Astrocyte of the cerebellum (primary cell): ENCODE measurements at regions of chr9 and their contacts with region 1.

Region 1: GRCh38 chr9:10534850-10535249 is 78.0 kb downstream of the PTPRD start:
- DNase-seq: no peak
- H3K4me3 ChIP-seq: no peak overlapping the region
- CTCF ChIP-seq: no peak

Region 2: GRCh38 chr9:10232352-10232930 is 302.4 kb before region 1 on chr9:
- in situ Hi-C with region 1: no loop called
- DNase-seq: no peak
- H3K4me3 ChIP-seq: no peak overlapping the region
- CTCF ChIP-seq: peak; percentile 44

Region 3: GRCh38 chr9:10282084-10282483 is 252.8 kb before region 1 on chr9:
- in situ Hi-C with region 1: no loop called
- DNase-seq: no peak
- H3K4me3 ChIP-seq: no peak overlapping the region
- CTCF ChIP-seq: no peak

Region 4: DNA sequence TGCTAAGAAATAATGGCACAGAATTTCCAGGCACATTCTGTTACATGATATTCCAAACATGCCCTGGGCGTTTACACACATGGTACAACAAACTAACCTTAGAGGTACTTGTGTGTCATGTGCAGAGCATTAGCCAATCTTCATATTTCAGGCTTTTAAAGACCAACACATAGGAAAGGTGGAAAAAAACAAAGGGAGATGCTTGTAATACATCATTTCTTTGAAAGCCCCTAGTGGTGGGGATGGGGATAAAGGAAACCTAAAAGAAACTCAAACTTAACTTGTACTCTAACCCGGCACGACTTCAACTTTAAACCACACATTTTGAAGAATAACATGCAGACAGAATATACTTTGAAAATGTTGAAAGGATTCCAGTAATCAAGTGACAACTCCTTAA is 55.7 kb before region 1 on chr9:
- in situ Hi-C with region 1: no loop called
- DNase-seq: no peak
- H3K4me3 ChIP-seq: no peak overlapping the region
- CTCF ChIP-seq: peak; percentile 34

Region 5: GRCh38 chr9:10594482-10594881 is 59.6 kb after region 1 on chr9:
- in situ Hi-C with region 1: loop called (anchors 10 kb)
- DNase-seq: no peak
- H3K4me3 ChIP-seq: no peak overlapping the region
- CTCF ChIP-seq: no peak